Common myeloid progenitor, CD34-positive (primary cell): ENCODE measurements at regions of chr19 and their contacts with region 1.

Region 1: GRCh38 chr19:40542202-40542859 is 34.3 kb upstream of the SHKBP1 start:
- DNase-seq: no peak
- H3K4me3 ChIP-seq: no peak overlapping the region
- H3K27ac ChIP-seq: no peak overlapping the region
- H3K4me1 ChIP-seq: no peaks in the 10 kb centered on the region
- H3K27me3 ChIP-seq: peaks cover 0 to 6% (median 0%) of the 10 kb centered on the region in 5 experiments

Region 2: DNA sequence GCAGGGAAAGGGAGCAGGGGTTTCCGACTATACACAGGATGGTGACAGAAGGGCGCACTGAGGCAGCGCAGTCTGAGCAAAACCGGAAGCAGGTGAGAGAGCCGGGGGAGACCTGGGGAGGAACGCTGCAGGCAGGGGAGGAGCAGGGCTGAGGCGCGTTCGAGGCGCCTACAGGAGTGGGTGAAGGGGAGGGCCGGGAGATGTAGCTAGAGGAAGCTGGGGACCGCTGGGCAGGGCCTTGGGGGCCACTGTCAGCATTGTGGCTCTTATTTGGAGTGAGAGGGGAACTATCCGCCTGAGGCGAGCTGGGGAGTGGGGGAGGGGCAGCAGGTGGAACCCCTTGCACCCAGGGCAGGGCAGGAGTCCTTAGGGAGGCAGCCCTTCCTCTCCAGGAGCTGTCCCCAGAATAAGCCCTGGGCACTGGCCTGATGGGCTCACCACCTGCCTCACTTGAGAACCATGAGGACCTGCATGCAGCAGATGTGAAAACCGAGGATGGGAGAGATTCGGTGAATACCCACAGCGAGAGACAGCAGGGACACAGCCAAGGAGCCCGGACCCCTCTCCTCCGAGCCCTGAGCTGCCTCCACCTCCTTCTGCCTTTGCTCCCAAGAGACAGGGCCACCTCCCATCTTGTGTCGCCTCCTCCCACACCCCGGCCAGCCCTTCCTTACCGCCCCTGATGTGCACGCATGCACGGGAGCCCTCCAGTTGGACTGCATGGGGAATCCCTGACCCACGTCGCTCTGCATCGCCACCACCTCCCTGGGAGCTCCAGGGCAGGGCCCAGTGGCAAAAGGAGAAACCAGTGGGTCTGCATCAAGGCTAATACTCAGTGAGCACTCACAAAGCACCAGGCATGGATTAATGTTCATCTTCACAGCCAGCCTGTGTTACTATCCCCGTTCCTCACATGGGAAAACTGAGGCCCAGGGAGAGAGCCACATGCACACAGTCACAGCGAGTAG is 267.5 kb before region 1 on chr19:
- CTCF ChIA-PET with region 1: no interaction called
- POLR2A ChIA-PET with region 1: no interaction called
- DNase-seq: peak in 2 of 3 donors; percentile 59 to 63
- H3K4me3 ChIP-seq: peak overlapping the region in 2 of 7 experiments; percentile 31 to 48
- H3K27ac ChIP-seq: peak overlapping the region in 1 of 2 experiments; percentile 54
- H3K4me1 ChIP-seq: peaks cover 0 to 53% (median 41%) of the 10 kb centered on the region in 4 experiments
- H3K27me3 ChIP-seq: no peaks in the 10 kb centered on the region

Region 3: GRCh38 chr19:40472516-40472915 is 69.8 kb before region 1 on chr19:
- CTCF ChIA-PET with region 1: no interaction called
- POLR2A ChIA-PET with region 1: no interaction called
- DNase-seq: no peak
- H3K4me3 ChIP-seq: no peak overlapping the region
- H3K27ac ChIP-seq: no peak overlapping the region
- H3K4me1 ChIP-seq: peaks cover 0 to under 1% (median 0%) of the 10 kb centered on the region in 4 experiments
- H3K27me3 ChIP-seq: peaks cover 0 to 13% (median 7%) of the 10 kb centered on the region in 5 experiments

Region 4: GRCh38 chr19:40598121-40598917 is 56.0 kb after region 1 on chr19:
- CTCF ChIA-PET with region 1: interaction called, 57 read pairs
- POLR2A ChIA-PET with region 1: no interaction called
- DNase-seq: peak; percentile 76 to 83 (median 83)
- H3K4me3 ChIP-seq: peak overlapping the region in 3 of 7 experiments; percentile 4 to 38 (median 14)
- H3K27ac ChIP-seq: no peak overlapping the region
- H3K4me1 ChIP-seq: peaks cover 0 to 58% (median 50%) of the 10 kb centered on the region in 4 experiments
- H3K27me3 ChIP-seq: peaks cover 2 to 56% (median 23%) of the 10 kb centered on the region in 5 experiments

Region 5: GRCh38 chr19:40633207-40633606 is 90.9 kb after region 1 on chr19:
- CTCF ChIA-PET with region 1: interaction called, 10 read pairs
- POLR2A ChIA-PET with region 1: no interaction called
- DNase-seq: no peak
- H3K4me3 ChIP-seq: peak overlapping the region in 1 of 7 experiments; percentile 19
- H3K27ac ChIP-seq: no peak overlapping the region
- H3K4me1 ChIP-seq: peaks cover 0 to 3% (median 3%) of the 10 kb centered on the region in 4 experiments
- H3K27me3 ChIP-seq: peaks cover 0 to 5% (median 0%) of the 10 kb centered on the region in 5 experiments